Panc1 (cell line): ENCODE measurements at regions of chr20 and their contacts with region 1.

Region 1: GRCh38 chr20:15199698-15200097 is 862.3 kb upstream of the FLRT3 start:
- DNase-seq: no peak
- ATAC-seq: no peak
- H3K4me3 ChIP-seq: no peak overlapping the region
- H3K27ac ChIP-seq: no peak overlapping the region
- H3K4me1 ChIP-seq: no peaks in the 10 kb centered on the region
- H3K27me3 ChIP-seq: no peaks in the 10 kb centered on the region
- CTCF ChIP-seq: no peak

Region 2: DNA sequence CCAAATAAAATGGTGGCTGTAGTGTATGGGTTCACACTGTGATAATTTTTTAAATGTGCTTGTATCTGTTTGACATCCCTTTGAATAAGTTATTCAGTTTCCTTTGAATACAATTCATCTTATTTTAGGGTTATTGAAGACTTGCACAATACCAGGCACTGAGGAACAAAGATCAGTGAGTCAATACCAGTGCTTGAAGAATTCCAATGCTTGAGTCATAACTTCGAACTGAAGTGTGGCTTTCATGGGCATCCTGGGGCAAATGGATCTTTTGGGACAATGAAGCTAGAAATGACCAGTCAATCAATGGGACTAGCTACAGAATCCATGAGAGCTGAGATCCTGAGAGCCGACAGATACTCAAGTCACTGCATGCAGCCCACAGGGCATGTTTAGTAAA is 512.4 kb before region 1 on chr20:
- CTCF ChIA-PET with region 1: interaction called, 11 read pairs
- POLR2A ChIA-PET with region 1: no interaction called
- in situ Hi-C with region 1: no loop called
- intact Hi-C with region 1: no loop called
- DNase-seq: no peak
- ATAC-seq: no peak
- H3K4me3 ChIP-seq: no peak overlapping the region
- H3K27ac ChIP-seq: no peak overlapping the region
- H3K4me1 ChIP-seq: no peaks in the 10 kb centered on the region
- H3K27me3 ChIP-seq: no peaks in the 10 kb centered on the region
- CTCF ChIP-seq: no peak